PC-9 (cell line): ENCODE measurements at regions of chr3 and their contacts with region 1.

Region 1: GRCh38 chr3:50530001-50530970 is 26.9 kb upstream of the CACNA2D2 start:
- DNase-seq: no peak
- H3K4me3 ChIP-seq: no peak overlapping the region
- H3K27ac ChIP-seq: no peak overlapping the region
- H3K4me1 ChIP-seq: no peaks in the 10 kb centered on the region
- H3K27me3 ChIP-seq: peaks cover 51% of the 10 kb centered on the region
- CTCF ChIP-seq: no peak

Region 2: GRCh38 chr3:50503504-50504342 is 26.6 kb before region 1 on chr3 and contains the start of gene CACNA2D2:
- CTCF ChIA-PET with region 1: no interaction called
- POLR2A ChIA-PET with region 1: no interaction called
- intact Hi-C with region 1: loop called (anchors 1 kb)
- DNase-seq: peak in 1 of 2 experiments; percentile 47
- H3K4me3 ChIP-seq: no peak within 1 kb of the TSS
- H3K27ac ChIP-seq: no peak within 1 kb of the TSS
- H3K4me1 ChIP-seq: no peaks in the 10 kb centered on the region
- H3K27me3 ChIP-seq: peaks cover 84% of the 10 kb centered on the region
- CTCF ChIP-seq: no peak
- total RNA-seq, gene CACNA2D2: not detected in 2 replicates

Region 3: DNA sequence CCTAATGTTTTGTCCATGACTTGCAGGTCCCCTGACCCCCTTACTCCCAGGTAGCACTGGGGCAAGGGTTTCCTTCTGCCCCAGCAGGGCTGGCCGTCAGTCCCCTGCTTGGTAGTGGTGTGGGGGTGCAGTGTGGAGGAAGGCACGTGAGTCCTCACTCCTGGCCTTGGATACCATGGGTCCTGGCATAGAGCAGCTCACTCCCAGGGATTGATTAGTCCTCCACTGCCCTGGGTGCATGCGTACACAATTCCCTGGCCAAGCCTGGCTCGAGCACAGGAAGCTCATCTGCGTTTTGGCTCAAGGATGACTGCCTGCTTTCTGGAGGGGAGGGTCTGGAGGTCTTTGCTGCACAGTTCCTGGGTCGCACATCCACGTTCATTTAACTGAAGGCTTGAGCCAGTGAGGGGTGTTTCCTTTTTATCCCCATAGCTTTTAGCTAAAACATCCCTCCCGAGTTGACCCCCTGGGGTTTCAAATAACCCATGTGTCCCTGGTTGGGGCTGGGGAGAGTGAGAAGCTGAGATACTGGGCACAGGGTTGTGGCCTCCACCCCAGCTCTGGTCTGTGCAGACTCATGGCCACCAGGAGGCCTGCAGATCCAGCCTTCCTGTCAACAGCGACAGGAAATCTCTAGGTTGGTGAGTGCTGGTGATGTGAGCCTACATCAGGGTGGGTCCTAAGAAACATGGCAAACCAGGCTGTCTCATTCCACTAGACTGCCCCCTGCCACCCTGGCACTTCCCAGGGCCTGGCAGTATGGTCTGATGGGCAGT is 50.6 kb after region 1 on chr3:
- CTCF ChIA-PET with region 1: no interaction called
- POLR2A ChIA-PET with region 1: no interaction called
- intact Hi-C with region 1: no loop called
- DNase-seq: peak in 1 of 2 experiments; percentile 21
- H3K4me3 ChIP-seq: no peak overlapping the region
- H3K27ac ChIP-seq: no peak overlapping the region
- H3K4me1 ChIP-seq: no peaks in the 10 kb centered on the region
- H3K27me3 ChIP-seq: no peaks in the 10 kb centered on the region
- CTCF ChIP-seq: no peak